HEK293 (cell line): ENCODE measurements at regions of chr1 and their contacts with region 1.

Region 1: GRCh38 chr1:176374967-176375569 is 87.9 kb upstream of the PAPPA2 start:
- H3K4me3 ChIP-seq: no peak overlapping the region
- H3K27ac ChIP-seq: no peak overlapping the region
- H3K4me1 ChIP-seq: no peaks in the 10 kb centered on the region
- CTCF ChIP-seq: peak; percentile 57

Region 2: GRCh38 chr1:176391621-176392020 is 16.6 kb after region 1 on chr1:
- CTCF ChIA-PET with region 1: no interaction called
- POLR2A ChIA-PET with region 1: no interaction called
- H3K4me3 ChIP-seq: no peak overlapping the region
- H3K27ac ChIP-seq: no peak overlapping the region
- H3K4me1 ChIP-seq: no peaks in the 10 kb centered on the region
- CTCF ChIP-seq: no peak

Region 3: GRCh38 chr1:176691251-176692228 is 316.5 kb after region 1 on chr1:
- CTCF ChIA-PET with region 1: interaction called, 25 read pairs
- POLR2A ChIA-PET with region 1: no interaction called
- H3K4me3 ChIP-seq: no peak overlapping the region
- H3K27ac ChIP-seq: no peak overlapping the region
- H3K4me1 ChIP-seq: no peaks in the 10 kb centered on the region
- CTCF ChIP-seq: peak; percentile 63

Region 4: DNA sequence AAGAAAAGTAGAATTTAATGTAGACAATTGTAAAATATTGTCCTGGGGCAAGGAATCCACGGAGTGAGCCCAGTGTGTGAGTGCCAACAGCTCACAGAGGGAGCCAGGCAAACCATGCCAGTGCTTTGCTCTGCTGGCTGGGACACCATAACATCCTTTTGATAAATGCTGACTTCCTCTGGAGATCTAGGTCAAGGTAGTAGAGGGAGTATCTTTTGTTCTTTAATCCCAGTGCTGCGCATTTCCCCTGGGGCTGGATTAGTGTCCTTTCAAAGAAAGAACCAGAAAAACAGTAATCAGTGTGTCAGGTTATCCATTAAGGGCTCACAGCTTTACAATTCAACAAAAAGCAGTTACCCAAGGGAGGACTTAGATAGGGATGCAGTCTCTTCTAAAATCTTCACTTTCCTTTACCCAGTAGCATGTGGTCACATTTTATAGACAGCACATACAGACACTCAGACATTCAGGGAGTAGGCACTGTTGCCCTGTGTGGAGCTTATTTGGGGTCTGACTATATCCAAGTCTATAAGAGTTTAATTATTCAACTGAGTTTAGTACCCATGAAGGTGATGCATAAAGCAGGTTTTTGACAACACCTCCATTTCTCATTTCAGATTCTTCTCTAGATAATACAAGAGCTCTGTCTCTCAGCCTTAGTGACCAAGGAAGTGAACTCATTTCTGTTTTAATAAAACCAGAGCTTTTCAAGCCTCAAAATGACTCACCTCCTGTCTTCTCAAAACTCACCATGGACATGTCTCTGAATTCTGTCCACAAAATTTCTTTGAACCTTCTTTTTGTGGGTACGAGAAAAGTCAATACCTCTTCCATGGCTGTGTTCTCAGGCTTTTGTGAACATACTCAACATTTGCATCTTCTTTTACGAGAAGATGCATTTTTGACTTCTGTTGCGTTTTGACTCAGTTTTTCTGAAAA is 1011.0 kb after region 1 on chr1:
- CTCF ChIA-PET with region 1: interaction called, 11 read pairs
- POLR2A ChIA-PET with region 1: no interaction called
- H3K4me3 ChIP-seq: no peak overlapping the region
- H3K27ac ChIP-seq: no peak overlapping the region
- H3K4me1 ChIP-seq: no peaks in the 10 kb centered on the region
- CTCF ChIP-seq: no peak